Cardiac septum (tissue), 1 donor: ENCODE measurements at regions of chr6 and their contacts with region 1.

Region 1: DNA sequence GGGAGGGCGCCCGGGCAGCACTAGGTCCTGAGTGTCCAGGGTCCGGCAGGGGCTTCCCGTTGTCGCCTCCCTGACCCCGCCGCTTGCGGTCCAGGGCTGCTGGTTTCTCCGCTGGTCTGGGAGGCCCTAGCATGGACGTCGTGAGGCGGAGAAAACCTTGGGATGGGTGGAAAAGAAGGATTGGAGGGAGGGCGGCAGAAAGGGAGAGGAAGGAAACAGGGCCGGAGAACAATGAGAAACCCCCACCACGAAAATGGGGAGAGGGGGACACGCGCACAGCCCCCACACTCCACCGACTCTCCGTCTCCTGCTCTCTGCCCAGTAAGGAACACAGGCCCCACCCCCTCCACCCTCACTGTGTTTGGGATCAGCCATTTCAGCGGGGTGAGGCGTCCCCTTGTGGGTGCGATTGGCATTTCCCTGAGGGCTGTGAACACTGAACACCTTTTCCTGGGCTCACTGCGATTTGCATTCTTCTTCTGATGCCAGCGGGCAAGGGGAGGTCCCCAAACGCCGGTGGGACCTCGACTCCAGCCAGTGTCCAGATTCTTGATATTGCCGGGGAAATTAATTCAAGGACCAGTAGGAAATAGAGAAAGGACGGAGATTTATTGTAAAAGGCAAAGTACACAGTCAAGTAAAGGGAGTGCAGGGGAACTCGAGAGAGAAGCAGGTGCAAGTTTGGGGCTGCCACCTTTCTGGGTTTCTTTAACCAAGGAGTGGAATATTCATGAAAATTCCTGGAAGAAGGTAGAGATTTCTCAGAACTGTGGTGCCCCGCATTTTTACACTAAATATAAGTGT is 3.3 kb upstream of the RAET1G start:
- DNase-seq: peak; percentile 92

Region 2: GRCh38 chr6:149717588-149718458 is 208.4 kb before region 1 on chr6 and contains the start of gene LATS1:
- intact Hi-C with region 1: loop called (anchors 5 kb)
- DNase-seq: peak; percentile 96
- total RNA-seq, gene LATS1: 14.6 TPM

Region 3: DNA sequence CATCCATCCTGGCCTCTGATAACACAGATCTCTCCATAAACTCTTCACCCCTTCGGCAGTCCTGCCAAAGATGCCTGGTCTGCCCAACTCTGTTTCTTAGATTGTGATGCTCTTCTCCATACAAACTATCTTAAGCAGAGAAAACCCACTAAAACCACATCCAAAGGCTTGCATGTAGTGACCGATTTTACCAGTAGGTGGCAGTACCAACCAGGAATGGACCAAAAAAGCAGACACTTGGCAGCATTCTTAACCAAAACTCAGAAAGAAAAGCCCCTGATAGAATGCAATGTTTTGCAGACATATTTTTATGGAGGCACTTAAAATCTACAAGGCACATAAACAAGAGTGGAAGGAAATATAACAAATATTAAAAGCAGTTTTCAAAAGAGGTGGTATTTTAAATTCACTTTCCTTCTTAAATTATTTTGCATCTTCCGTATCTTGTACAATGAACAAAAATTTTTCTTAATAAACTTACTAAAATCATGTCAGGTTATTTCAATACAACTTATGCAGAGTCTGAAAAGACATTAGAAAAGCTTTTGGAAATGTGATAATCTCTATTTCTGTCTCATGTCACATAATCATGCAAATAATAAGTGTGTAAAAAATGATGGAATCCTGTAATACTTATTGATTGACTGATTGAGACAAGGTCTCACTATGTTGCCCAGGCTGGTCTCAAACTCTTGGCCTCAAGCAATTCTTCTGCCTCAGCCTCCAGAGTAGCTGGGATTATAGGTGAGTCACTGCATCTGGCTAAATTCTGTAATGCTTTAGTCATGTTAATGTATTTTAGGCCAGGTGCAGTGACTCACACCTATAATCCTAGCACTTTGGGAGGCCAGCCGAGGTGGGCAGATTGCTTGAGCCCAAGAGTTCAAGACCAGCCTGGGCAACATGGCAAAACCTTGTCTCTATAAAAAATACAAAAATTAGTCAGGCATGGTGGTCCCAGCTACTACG is 91.4 kb before region 1 on chr6:
- intact Hi-C with region 1: loop called (anchors 2 kb)
- DNase-seq: no peak

Region 4: DNA sequence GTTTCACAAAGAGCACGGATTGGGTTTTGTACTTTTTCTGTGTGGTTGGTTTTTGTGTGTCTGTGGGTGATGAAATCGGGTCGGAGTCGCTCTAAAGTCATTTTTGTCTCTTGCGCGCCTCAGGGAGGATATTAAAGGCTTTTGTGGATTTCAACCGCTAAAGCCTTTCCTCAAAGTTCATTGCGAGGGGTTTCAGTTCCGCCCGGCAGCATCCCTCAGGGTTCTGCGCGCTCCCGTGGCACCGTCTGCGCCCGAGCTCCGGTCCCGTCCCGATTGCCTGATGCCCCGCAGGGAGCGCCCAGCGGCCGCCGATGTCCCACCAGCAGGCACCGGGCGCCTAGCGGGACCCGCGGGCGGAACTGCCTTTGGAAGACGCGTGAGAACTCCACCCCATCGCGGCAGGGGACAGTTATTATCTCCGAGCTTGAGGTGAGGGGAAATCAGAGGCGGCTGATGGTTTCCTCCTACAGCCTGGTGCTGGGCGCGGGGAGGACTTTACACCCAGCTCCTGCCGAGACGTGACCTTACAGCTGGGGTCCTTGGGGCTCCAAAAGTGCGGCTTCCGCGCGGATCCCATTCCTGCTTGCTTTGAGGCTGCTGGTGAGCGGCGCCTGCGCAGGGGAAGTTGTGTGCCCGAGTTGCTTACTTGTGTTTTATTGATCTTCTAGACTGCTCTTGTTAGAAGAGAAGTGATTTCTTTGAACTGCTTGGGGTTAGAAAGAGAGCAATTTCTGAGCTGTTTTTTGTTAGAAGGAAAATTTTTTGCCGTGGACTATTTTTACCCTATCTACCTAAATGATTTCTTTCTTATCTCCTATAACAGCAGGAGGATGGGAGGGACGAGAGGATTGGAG is 64.7 kb after region 1 on chr6:
- intact Hi-C with region 1: no loop called
- DNase-seq: no peak